Psoas muscle (tissue), 8 donors: ENCODE measurements at regions of chr6 and their contacts with region 1.

Region 1: DNA sequence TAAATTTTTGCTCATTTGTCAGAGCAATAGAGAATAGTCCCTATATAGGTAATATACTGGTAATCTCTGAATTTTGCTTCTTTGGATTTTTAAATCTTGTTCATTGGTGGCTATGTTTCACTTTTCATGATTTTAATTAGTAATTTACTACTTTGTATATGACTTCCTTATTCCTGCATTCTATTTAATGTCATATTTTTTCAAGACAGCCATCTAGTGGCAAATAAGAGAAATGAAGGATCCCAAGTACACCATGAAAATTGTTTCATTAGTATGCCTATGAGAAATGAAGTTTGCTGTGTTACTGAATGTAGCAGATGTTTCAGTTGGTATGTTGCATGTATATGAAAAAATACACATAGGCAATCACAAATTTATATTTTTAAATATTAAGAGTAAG is 82.4 kb downstream of the ZNF292 start:
- DNase-seq: no peak
- ATAC-seq: peak in 1 of 4 donors; percentile 76
- H3K4me3 ChIP-seq: no peak overlapping the region
- H3K27ac ChIP-seq: no peak overlapping the region
- H3K4me1 ChIP-seq: no peaks in the 10 kb centered on the region
- H3K27me3 ChIP-seq: no peaks in the 10 kb centered on the region
- CTCF ChIP-seq: peak; percentile 60

Region 2: DNA sequence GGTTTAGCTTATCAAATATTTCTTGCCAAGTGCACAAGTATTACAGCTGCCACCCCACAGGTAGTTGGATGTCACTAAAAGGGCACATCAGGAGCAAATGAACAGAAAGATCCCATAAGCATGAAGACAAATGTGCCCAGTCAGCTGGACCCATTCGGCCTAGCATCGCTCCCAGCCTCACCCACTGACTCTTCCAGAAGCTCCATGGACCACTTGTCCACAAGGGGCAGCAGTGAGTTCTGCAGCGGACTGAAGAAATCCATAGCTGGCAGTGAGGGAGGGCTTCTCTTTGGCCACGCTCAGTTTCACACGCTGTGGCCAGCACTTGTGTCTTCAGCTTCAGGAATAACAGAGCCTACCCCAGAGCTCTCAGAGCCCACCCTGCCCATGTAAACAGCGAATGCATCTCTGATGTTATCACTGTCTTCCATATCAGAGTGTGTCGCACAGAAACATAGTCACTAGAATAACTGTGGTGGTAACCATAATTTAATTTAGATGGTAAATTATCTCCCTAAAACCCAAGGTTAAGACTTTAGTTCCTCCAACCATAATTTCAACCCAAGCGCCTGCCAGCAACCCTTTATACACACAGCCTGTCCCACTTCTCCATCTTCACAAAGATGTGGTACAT is 158.7 kb before region 1 on chr6:
- intact Hi-C with region 1: loop called in 1 of 2 experiments (anchors 10 kb)
- DNase-seq: peak; percentile 31 to 73
- ATAC-seq: peak; percentile 57 to 79 (median 72)
- H3K4me3 ChIP-seq: no peak overlapping the region
- H3K27ac ChIP-seq: no peak overlapping the region
- H3K4me1 ChIP-seq: no peaks in the 10 kb centered on the region
- H3K27me3 ChIP-seq: no peaks in the 10 kb centered on the region
- CTCF ChIP-seq: peak; percentile 75

Region 3: GRCh38 chr6:87139236-87139635 is 98.6 kb before region 1 on chr6:
- intact Hi-C with region 1: loop called (anchors 1 to 5 kb)
- DNase-seq: no peak
- ATAC-seq: peak; percentile 61 to 88 (median 70)
- H3K4me3 ChIP-seq: no peak overlapping the region
- H3K27ac ChIP-seq: no peak overlapping the region
- H3K4me1 ChIP-seq: no peaks in the 10 kb centered on the region
- H3K27me3 ChIP-seq: no peaks in the 10 kb centered on the region
- CTCF ChIP-seq: peak; percentile 78